Sigmoid colon (tissue), 7 donors: ENCODE measurements at regions of chr20 and their contacts with region 1.

Region 1: DNA sequence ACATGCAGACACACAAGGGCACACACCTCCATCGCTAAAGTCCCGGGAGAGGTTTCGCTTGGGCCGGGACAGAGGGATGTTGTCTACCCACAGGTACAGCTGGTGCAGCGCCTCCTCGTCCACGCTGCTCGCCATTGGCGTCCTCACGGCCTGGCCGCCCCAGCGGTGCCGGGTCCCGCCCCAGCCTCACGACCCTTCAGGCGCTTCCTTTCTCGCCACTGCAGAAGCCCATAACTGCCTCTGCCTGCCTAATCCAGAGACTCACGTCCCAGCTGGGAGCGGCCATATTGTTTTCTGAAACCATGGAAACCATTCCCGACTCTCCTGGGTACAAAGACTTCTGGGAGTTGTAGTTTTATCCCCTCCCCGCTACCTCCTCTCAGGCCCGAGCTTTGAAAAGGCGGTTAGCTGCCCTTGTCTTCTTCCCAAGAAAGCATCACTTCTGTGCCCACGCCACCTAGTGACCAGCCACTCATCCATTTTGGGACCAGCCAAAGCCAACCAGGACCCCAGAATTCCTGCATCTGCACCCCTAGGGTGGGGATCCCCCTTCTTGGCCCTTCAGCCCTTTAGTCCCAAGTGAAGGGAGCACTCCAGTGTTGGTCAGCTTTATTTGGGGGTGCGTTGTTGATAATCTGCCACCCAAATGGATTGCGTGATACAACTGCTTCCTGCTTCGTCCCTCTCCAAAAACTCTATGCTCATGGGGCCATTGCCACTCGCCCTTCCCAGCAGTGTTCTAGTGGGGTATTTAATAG is at the start of gene SPEF1:
- DNase-seq: peak; percentile 92
- H3K4me3 ChIP-seq: peak within 1 kb of the TSS in 3 of 4 donors; percentile 30 to 43 (median 41)
- H3K27ac ChIP-seq: peak within 1 kb of the TSS; percentile 43 to 65 (median 60)
- H3K4me1 ChIP-seq: peaks cover 0 to 64% (median 51%) of the 10 kb centered on the region in 4 donors
- H3K27me3 ChIP-seq: no peaks in the 10 kb centered on the region
- CTCF ChIP-seq: peak in 2 of 4 experiments; percentile 27 to 52
- EP300 ChIP-seq: no peak
- POLR2A ChIP-seq: no peak
- total RNA-seq, gene SPEF1: 0.81 TPM in 1 of 4 donors, not detected in the others

Region 2: DNA sequence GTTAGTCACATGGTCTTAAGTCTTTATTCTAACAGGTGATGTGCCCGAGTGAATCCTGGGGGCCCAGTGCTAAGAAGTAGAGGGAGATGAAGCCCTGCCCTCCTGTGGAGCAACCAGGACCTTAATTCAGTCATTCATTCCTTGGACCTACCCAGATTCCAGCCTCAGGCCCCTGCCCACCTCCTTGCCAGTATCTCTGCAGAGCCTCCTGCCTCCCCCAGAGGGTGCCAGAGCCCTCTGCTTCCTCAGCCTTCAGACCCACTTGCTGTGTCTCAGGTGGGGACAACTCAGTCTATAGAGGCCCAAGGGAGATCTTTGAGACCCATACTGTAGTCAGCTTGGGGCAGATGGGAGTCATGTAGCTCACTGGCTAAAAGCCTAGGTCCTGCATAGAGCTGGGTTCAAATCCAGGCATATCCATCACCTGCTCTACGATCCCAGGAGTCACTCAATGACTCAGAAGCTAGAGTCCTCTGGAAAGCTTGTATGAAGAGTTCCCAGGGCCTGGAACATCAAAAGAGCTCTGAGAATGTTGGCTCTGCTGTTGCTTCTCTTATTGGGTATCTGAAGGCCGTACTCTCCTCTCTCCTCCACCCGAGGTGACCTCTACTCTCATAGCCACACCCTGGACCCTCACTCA is 65.0 kb before region 1 on chr20:
- intact Hi-C with region 1: loop called (anchors 5 kb)
- DNase-seq: peak; percentile 73
- H3K4me3 ChIP-seq: no peak overlapping the region
- H3K27ac ChIP-seq: no peak overlapping the region
- H3K4me1 ChIP-seq: peaks cover 0 to under 1% (median 0%) of the 10 kb centered on the region in 4 donors
- H3K27me3 ChIP-seq: no peaks in the 10 kb centered on the region
- CTCF ChIP-seq: peak; percentile 28 to 71 (median 40)
- EP300 ChIP-seq: no peak
- POLR2A ChIP-seq: no peak

Region 3: GRCh38 chr20:3753098-3753980 is 28.0 kb before region 1 on chr20:
- intact Hi-C with region 1: loop called (anchors 1 kb)
- DNase-seq: peak; percentile 85
- H3K4me3 ChIP-seq: no peak overlapping the region
- H3K27ac ChIP-seq: peak overlapping the region in 2 of 4 donors; percentile 21 to 48
- H3K4me1 ChIP-seq: peaks cover 0 to 21% (median 8%) of the 10 kb centered on the region in 4 donors
- H3K27me3 ChIP-seq: peaks cover 0 to 11% (median 0%) of the 10 kb centered on the region in 3 donors
- CTCF ChIP-seq: peak; percentile 55 to 79 (median 74)
- EP300 ChIP-seq: no peak
- POLR2A ChIP-seq: no peak

Region 4: GRCh38 chr20:4199532-4199931 is 418.2 kb after region 1 on chr20:
- intact Hi-C with region 1: no loop called
- DNase-seq: no peak
- H3K4me3 ChIP-seq: no peak overlapping the region
- H3K27ac ChIP-seq: no peak overlapping the region
- H3K4me1 ChIP-seq: no peaks in the 10 kb centered on the region
- H3K27me3 ChIP-seq: no peaks in the 10 kb centered on the region
- CTCF ChIP-seq: no peak
- EP300 ChIP-seq: no peak
- POLR2A ChIP-seq: no peak